Brain microvascular endothelial cell (primary cell): ENCODE measurements at regions of chr4 and their contacts with region 1.

Region 1: DNA sequence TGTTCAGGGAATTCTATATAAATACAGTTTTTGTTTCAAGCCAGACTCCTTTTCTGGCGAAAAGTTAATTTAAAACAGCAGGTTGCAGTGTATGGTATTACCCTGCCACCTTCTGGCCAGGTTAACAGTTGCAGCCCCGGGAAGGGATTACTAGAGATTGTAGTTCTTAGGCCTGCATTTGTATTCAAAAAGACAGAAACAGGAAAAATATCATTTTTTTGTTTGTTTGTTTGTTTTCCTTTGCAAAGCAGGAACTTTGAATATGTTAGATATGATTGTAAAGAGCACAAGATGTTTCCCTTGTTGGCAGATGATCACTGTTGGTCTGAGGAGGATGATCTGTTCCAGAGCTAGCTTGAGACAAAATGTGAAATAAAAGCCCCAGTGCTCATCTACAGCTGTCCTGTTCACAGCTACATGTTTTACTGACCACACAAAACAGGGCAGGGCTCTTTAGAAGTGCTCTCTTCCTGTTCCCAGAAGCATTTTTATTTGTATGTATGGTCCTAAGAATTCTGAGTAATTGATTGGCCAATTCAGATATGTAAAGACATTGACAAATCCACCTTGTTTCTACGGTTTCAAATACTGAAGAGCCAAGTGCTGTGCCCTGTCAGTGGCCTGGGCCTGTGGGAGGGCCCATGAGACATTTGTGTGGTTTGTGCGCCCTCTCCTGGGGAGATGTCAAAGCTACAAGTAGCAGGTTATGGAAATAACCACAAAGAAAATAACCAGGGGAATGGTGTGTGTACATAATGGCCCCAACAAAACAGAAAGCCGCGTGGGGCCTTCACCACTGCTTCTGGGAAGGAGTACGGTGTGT is 57.9 kb downstream of the CLDN22 start:
- DNase-seq: peak; percentile 76
- H3K4me3 ChIP-seq: no peak overlapping the region
- H3K27ac ChIP-seq: no peak overlapping the region
- H3K27me3 ChIP-seq: no peaks in the 10 kb centered on the region
- CTCF ChIP-seq: peak; percentile 89

Region 2: GRCh38 chr4:182938205-182938645 is 323.9 kb before region 1 on chr4:
- in situ Hi-C with region 1: loop called (anchors 25 kb)
- DNase-seq: no peak
- H3K4me3 ChIP-seq: no peak overlapping the region
- H3K27ac ChIP-seq: no peak overlapping the region
- H3K27me3 ChIP-seq: no peaks in the 10 kb centered on the region
- CTCF ChIP-seq: peak; percentile 98

Region 3: DNA sequence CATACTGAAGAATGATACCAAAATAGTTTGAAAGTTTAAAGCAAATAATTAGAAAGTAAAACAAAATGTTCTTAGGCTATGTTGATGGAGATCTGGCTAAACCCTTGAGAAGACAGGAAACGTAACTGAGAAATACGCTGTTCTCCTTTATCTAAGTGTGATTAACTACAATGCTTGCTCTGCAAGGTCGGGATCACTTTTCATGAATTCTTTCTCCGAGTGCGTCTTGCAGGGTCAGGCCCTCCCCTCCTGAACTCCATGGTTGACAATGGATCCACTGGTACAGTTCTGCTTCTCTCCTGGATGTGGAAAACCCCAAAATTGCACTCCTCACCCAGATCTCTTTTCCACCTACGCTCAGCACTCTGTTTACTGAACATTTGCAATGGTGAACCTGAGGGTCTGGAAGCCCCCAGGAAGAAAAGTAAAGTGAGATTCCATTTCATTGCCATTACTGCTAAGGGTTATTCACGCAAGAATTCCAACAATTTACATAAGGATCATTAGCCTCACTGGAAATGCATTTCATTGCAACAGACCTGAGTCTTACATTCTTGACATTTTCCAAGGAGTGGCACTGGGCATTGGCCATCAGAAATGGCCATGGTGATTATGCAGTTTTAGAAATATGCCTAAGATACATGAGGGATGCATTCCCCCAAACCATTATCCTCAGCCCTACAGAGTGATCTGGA is 187.7 kb before region 1 on chr4:
- in situ Hi-C with region 1: loop called (anchors 25 kb)
- DNase-seq: no peak
- H3K4me3 ChIP-seq: no peak overlapping the region
- H3K27ac ChIP-seq: no peak overlapping the region
- H3K27me3 ChIP-seq: no peaks in the 10 kb centered on the region
- CTCF ChIP-seq: no peak

Region 4: DNA sequence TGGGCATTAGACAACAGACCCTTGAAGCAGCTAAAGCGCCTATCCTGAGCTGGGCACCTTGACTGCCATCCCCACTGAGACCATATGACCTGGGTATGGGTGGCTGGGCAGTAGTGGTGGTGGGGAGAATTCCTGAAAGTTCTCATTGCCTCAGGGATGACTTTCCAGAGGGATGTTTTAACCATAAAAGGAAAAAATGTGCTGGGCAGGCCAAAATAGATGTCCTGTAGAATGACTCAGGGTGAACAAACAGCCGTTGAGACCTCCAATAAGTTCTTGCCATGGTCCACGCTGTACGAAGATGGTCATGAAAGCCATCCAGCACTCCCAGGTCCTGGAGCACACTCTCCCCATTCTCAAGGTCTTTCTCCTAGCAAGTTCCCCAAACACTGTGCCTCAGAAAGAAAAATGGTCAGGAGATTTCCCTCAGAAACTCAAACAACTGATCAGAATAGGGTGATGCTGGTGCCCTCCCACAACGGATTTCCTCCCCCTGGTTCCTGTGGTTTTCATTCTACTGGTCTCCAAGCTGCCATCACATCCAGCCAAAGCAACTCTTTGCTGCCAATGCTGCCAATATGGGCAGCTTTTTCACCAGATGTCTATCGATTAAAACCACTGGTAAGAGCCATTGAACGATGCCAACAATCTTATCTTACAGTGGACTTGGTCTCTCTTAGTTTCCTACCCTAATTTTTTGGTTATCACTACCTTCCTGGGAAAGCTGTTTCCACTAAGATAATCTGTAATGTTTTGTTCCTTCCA is 193.4 kb after region 1 on chr4:
- in situ Hi-C with region 1: no loop called
- DNase-seq: peak; percentile 38
- H3K4me3 ChIP-seq: no peak overlapping the region
- H3K27ac ChIP-seq: peak overlapping the region; percentile 40
- H3K27me3 ChIP-seq: no peaks in the 10 kb centered on the region
- CTCF ChIP-seq: no peak